Heart right ventricle (tissue), 16 donors: ENCODE measurements at regions of chr12 and their contacts with region 1.

Region 1: GRCh38 chr12:15842108-15842507 is 40.1 kb upstream of the STRAP start:
- DNase-seq: no peak
- ATAC-seq: peak in 1 of 8 donors; percentile 61
- H3K4me3 ChIP-seq: no peak overlapping the region
- H3K27ac ChIP-seq: peak overlapping the region in 4 of 10 donors; percentile 12 to 23 (median 18)
- H3K4me1 ChIP-seq: peaks cover 0 to 18% (median 0%) of the 10 kb centered on the region in 9 donors
- H3K27me3 ChIP-seq: no peaks in the 10 kb centered on the region
- CTCF ChIP-seq: no peak

Region 2: GRCh38 chr12:15796493-15797141 is 45.5 kb before region 1 on chr12:
- intact Hi-C with region 1: loop called in 3 of 10 experiments (anchors 5 to 10 kb)
- DNase-seq: no peak
- ATAC-seq: no peak
- H3K4me3 ChIP-seq: no peak overlapping the region
- H3K27ac ChIP-seq: no peak overlapping the region
- H3K4me1 ChIP-seq: peaks cover 0 to 9% (median 0%) of the 10 kb centered on the region in 9 donors
- H3K27me3 ChIP-seq: no peaks in the 10 kb centered on the region
- CTCF ChIP-seq: no peak